ENCODE measurements at regions of chr13 and their contacts with region 1.

Region 1: DNA sequence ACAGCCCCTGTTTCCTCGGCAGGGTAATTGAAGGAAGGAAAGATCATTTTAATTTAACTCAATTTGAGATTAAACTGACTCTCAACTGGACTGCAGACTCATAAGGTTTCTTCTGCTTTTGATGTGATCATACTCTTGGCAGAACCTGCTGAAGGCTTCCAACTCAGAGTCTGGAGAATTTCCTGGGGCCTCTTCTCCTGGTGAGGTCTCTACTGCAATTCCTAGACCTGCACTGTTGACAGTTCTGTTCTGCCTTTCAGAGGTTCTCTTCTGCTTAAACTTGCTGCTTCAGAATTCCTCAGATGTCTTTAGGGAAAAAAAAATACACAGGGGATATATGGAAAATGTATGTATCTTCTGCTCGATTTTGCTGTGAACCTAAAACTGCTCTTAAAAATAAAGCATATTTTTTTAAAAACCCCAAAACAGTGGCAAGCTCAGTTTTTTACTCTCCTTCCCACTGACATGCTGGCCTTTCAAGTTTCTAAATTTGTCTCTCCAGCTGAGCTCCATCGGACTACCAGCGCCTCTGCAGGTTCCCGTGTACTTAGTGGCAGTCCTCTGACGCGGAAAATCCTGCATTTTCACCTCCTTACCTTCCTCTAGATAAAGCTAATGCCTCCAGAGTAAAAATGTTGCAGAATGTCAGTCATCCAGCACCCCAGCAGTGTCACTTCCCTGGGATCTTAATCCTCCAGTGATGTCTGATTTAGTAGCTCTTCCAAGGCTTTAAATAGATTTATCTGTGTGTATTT is 733.5 kb upstream of the SGCG start:
- DNase-seq: no peak
- H3K4me3 ChIP-seq: no peak overlapping the region
- H3K27ac ChIP-seq: no peak overlapping the region
- H3K4me1 ChIP-seq: no peaks in the 10 kb centered on the region
- H3K27me3 ChIP-seq: no peaks in the 10 kb centered on the region
- CTCF ChIP-seq: no peak

Region 2: GRCh38 chr13:21218351-21219035 is 1228.8 kb before region 1 on chr13:
- CTCF ChIA-PET with region 1: no interaction called
- POLR2A ChIA-PET with region 1: no interaction called
- intact Hi-C with region 1: no loop called
- DNase-seq: no peak
- H3K4me3 ChIP-seq: no peak overlapping the region
- H3K27ac ChIP-seq: peak overlapping the region; percentile 4
- H3K4me1 ChIP-seq: peaks cover 12% of the 10 kb centered on the region
- H3K27me3 ChIP-seq: no peaks in the 10 kb centered on the region
- CTCF ChIP-seq: no peak

Region 3: GRCh38 chr13:22256111-22256639 is 191.1 kb before region 1 on chr13:
- CTCF ChIA-PET with region 1: no interaction called
- POLR2A ChIA-PET with region 1: no interaction called
- intact Hi-C with region 1: no loop called
- DNase-seq: no peak
- H3K4me3 ChIP-seq: no peak overlapping the region
- H3K27ac ChIP-seq: no peak overlapping the region
- H3K4me1 ChIP-seq: no peaks in the 10 kb centered on the region
- H3K27me3 ChIP-seq: no peaks in the 10 kb centered on the region
- CTCF ChIP-seq: 0 out of 2 replicates have a peak, but pooled peaks have one; percentile 21

Region 4: DNA sequence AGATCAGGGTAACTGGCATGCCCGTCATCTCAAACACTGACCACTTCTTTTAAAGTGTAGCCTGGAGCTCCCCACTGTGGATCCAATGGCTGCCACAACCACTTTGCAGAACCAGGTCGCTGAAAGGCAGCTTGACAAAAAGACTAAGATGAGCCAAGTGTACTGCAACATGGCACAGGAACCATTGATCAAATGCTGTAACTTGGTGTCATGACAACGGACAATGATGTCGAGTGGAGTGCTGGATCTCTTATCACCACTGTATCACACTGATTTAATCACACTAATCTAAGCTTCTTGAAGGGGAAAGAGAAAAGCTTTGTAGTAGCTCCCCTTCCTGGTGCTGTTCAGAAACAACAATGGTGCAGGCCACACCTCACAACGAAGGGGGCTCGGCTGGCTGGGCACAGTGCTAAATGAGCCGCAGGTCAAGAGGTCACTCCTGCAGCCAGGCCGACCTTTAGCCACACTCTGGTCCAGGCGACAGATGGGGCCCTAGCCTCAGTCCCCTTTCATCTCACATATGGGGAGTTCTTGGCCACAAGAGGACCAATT is 1120.7 kb after region 1 on chr13:
- CTCF ChIA-PET with region 1: no interaction called
- POLR2A ChIA-PET with region 1: interaction called, 10 read pairs
- intact Hi-C with region 1: no loop called
- DNase-seq: no peak
- H3K4me3 ChIP-seq: no peak overlapping the region
- H3K27ac ChIP-seq: no peak overlapping the region
- H3K4me1 ChIP-seq: peaks cover 4% of the 10 kb centered on the region
- H3K27me3 ChIP-seq: peaks cover 41% of the 10 kb centered on the region
- CTCF ChIP-seq: no peak

Measured in A673 (cell line).